OCI-LY7 (cell line): ENCODE measurements at regions of chr9 and their contacts with region 1.

Region 1: DNA sequence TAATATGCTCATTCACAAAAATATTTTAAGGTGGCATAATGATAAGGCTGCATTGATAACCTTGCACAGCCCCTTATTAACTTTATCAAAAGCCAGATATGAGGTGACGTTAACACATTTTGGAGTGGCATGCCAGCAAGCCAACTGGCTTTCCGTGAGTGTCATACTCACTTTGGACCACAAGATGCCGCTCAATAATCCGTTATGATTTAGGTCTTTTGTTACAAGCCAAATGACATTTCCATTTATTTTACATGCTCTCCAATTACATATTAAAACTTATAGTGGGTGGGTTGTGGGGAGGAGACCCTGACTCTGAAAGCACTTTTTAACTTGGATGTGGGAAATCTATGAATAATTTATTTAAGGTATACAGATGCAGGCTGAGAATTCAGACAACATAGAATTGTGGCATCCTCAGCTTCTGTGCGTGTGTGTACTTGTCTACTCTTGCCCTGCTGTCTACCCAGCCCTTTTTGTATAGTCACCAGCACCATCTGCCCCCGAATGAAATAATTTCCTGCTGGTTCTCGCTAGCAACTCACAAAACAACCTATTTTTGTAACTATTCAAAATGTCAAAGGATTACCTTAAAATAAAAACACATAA is 305.1 kb downstream of the PSAT1 start:
- DNase-seq: peak; percentile 34
- H3K4me3 ChIP-seq: no peak overlapping the region
- H3K27ac ChIP-seq: no peak overlapping the region
- H3K4me1 ChIP-seq: no peaks in the 10 kb centered on the region
- CTCF ChIP-seq: peak; percentile 84

Region 2: DNA sequence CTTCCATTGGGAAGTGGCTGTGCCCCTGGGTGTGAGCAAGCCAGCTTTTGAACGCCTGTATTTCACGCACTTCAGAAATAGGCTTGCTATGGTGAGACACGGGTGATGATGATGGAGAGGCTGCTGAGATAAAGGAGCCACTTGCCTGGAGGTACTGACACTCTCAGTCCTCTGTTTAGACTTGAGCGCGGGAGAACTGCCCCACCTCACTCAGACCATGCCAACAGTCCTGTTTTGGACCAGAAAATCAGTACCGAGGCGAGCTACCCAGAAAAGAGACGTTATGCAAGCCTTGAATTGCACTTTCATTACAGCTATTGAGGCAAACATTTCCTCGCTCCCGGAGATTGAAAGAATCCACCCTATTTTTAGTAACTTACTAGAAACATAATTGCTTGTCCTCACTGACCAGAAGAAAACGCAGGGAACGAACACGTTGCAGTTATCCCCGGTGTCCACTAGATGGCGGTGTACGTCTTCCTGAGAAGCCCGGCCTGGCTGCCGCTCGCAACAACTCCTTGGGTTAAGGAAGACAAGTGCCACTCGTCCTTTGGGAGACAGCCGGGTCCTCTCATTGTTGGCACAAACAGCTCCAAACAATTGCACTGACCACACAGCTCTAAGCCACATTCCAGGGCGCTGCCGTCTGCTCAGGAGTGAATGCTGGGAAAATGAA is 162.7 kb before region 1 on chr9:
- CTCF ChIA-PET with region 1: no interaction called
- POLR2A ChIA-PET with region 1: no interaction called
- intact Hi-C with region 1: loop called (anchors 10 kb)
- DNase-seq: peak; percentile 70
- H3K4me3 ChIP-seq: no peak overlapping the region
- H3K27ac ChIP-seq: no peak overlapping the region
- H3K4me1 ChIP-seq: no peaks in the 10 kb centered on the region
- CTCF ChIP-seq: peak; percentile 99

Region 3: DNA sequence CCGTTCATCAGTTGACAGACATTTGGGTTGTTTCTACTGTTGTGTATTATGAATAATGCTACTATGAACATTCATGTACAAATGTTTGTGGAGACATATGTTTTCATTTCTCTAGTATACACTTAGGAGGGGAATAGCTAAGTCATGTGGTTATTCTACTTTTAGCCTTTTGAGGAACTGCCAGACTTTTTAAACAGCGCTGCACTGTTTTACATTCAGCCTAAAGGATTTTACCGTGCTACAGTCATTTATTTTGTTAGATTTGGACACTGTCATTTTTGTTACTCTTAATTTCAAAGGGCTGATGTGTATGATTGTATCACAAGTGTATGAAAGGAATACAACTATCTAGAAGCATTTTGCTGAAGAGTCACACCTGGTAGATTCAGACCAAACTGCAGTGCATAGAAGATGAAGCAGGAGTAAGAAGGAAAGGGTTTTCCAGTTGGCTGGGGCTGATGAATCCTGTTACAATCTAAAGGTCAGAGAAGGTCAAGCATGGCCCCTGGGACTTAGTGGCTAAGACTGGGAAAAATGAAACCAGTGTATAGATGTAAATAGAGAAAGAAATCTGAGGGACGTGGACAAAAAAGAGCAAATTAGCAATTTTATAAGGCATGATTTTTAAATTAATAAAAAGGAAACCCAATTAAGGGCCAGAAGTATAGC is 204.6 kb after region 1 on chr9:
- CTCF ChIA-PET with region 1: no interaction called
- POLR2A ChIA-PET with region 1: no interaction called
- intact Hi-C with region 1: no loop called
- DNase-seq: no peak
- H3K4me3 ChIP-seq: no peak overlapping the region
- H3K27ac ChIP-seq: no peak overlapping the region
- H3K4me1 ChIP-seq: no peaks in the 10 kb centered on the region
- CTCF ChIP-seq: no peak